Activated T-helper 2 cell treated with anti-CD3 and anti-CD28 coated beads, Interferon-gamma antibody, Interleukin-2, Interleukin-4, amounts not matched to agents 10 μg/mL and 5 μg/mL and 100 μg/mL, durations not matched to agents 14 hours and 24 hours and 36 hours (primary cell): ENCODE measurements at regions of chr2 and their contacts with region 1.

Region 1: GRCh38 chr2:69914170-69914960 is 544 bp upstream of the MXD1 start:
- DNase-seq: peak; percentile 100
- H3K4me3 Mint-ChIP-seq: peak overlapping the region; percentile 83
- H3K27ac Mint-ChIP-seq: peak overlapping the region; percentile 91
- H3K4me1 Mint-ChIP-seq: peaks cover 36% of the 10 kb centered on the region
- H3K27me3 Mint-ChIP-seq: no peaks in the 10 kb centered on the region

Region 2: GRCh38 chr2:69177785-69178636 is 736.4 kb before region 1 on chr2:
- intact Hi-C with region 1: no loop called
- DNase-seq: no peak
- H3K4me3 Mint-ChIP-seq: no peak overlapping the region
- H3K27ac Mint-ChIP-seq: no peak overlapping the region
- H3K4me1 Mint-ChIP-seq: peaks cover 8% of the 10 kb centered on the region
- H3K27me3 Mint-ChIP-seq: peaks cover 25% of the 10 kb centered on the region

Region 3: DNA sequence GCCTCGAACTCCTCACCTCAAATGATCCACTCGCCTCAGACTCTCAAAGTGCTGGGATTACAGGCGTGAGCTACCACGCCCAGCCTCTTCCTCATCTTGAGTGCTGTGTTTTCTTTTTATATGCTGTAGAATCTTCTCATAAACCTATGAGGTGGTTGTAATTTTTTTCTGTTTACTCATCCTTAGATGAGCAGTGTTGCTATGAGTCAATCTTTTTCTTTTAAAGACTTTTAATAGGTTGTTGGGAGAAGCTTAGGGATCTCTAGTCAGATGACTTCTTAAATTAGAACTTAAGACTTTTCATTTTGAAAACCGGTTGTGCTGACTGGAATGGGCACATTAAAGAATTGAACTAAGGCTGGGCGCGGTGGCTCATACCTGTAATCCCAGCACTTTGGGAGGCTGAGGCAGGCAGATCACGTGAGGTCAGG is 262.1 kb before region 1 on chr2:
- intact Hi-C with region 1: no loop called
- DNase-seq: no peak
- H3K4me3 Mint-ChIP-seq: no peak overlapping the region
- H3K27ac Mint-ChIP-seq: peak overlapping the region; percentile 74
- H3K4me1 Mint-ChIP-seq: peaks cover 50% of the 10 kb centered on the region
- H3K27me3 Mint-ChIP-seq: no peaks in the 10 kb centered on the region

Region 4: GRCh38 chr2:69893684-69894551 is 20.4 kb before region 1 on chr2 and contains the start of gene SNRNP27:
- intact Hi-C with region 1: loop called (anchors 2 kb)
- DNase-seq: peak; percentile 72
- H3K4me3 Mint-ChIP-seq: peak within 1 kb of the TSS; percentile 98
- H3K27ac Mint-ChIP-seq: peak within 1 kb of the TSS; percentile 97
- H3K4me1 Mint-ChIP-seq: peaks cover 28% of the 10 kb centered on the region
- H3K27me3 Mint-ChIP-seq: no peaks in the 10 kb centered on the region
- total RNA-seq, gene SNRNP27: 60.4 and 62.6 TPM in 2 replicates

Region 5: DNA sequence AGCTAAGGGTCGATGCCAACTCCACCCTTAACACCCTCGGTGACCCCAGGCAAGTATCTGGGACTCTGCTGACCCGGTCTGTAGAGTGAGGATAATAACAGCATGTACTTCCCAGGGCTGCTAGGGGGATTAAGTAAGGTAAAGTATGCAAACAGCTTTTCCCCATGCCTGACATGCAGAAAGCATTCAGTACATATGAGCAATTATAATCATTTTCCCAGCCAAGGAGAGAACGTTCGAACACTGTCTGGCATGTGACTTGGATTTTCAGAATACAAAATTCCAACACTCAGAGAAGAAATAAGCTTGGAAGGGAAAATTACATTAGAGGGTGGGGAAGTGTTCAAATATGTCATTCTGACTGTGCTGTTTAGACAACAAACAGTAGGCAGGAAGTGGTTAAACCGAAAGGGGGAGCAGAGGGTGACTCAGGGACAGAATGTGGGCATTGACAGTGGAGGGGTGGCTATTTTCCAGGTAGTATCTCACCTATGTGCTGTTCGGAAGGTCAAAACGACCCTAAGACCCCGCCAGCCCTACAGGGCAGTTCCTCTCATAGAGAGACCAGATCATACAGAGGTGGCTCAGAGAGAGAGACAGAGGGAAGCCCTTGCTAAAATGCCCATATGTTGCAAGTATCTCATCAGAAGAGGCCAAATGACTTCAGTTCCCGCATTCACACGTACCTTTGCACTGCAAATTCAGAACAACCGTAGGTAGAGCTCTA is 32.1 kb after region 1 on chr2:
- intact Hi-C with region 1: loop called (anchors 2 kb)
- DNase-seq: peak; percentile 67
- H3K4me3 Mint-ChIP-seq: no peak overlapping the region
- H3K27ac Mint-ChIP-seq: peak overlapping the region; percentile 85
- H3K4me1 Mint-ChIP-seq: peaks cover 44% of the 10 kb centered on the region
- H3K27me3 Mint-ChIP-seq: peaks cover 2% of the 10 kb centered on the region

Region 6: GRCh38 chr2:70069049-70069448 is 154.7 kb after region 1 on chr2:
- intact Hi-C with region 1: loop called (anchors 1 kb)
- DNase-seq: peak; percentile 75
- H3K4me3 Mint-ChIP-seq: no peak overlapping the region
- H3K27ac Mint-ChIP-seq: peak overlapping the region; percentile 86
- H3K4me1 Mint-ChIP-seq: peaks cover 41% of the 10 kb centered on the region
- H3K27me3 Mint-ChIP-seq: no peaks in the 10 kb centered on the region

Region 7: DNA sequence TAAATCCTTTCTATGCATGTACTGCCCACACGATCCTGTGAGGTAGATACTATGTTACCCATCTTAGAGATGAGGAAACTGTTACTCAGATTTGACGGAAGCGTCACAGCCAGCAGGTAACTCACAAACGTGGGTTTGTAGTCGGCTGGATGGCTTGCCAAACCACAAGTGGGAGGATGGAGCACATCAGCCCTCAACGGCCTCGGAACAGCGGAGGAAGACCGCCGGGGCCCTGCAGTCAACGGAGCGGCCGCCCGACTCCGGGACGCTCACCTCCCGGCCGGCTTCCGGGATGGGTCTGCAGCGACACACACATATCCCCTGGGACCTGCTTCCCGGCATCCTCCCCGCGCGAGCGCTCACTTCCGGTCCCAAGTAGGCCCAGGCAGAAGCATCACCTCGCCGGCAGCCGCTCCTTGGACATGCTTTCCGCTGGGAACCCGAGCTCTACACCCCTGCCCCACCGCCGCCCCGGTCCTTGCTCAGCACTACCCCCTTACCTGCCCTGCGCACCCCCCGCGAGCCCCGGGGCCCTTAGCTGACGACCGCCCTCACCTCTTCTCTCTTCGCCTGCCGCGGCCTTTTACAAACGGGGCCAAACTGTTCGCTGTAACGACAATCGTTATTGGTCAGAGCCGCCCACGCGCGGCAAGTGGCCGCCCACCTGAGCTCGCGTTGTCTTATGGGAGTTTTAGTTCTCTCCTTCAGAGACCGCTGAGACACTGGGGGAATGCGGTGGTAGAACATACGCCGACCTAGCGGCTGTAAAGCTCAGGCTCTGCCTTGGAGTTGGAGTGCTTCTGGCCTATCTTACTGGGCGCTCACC is 276.3 kb after region 1 on chr2 and contains the start of gene C2orf42:
- intact Hi-C with region 1: loop called (anchors 1 kb)
- DNase-seq: peak; percentile 94
- H3K4me3 Mint-ChIP-seq: peak within 1 kb of the TSS; percentile 96
- H3K27ac Mint-ChIP-seq: peak within 1 kb of the TSS; percentile 98
- H3K4me1 Mint-ChIP-seq: peaks cover 18% of the 10 kb centered on the region
- H3K27me3 Mint-ChIP-seq: peaks cover under 1% of the 10 kb centered on the region
- total RNA-seq, gene C2orf42: 22.1 and 24.7 TPM in 2 replicates

Region 8: DNA sequence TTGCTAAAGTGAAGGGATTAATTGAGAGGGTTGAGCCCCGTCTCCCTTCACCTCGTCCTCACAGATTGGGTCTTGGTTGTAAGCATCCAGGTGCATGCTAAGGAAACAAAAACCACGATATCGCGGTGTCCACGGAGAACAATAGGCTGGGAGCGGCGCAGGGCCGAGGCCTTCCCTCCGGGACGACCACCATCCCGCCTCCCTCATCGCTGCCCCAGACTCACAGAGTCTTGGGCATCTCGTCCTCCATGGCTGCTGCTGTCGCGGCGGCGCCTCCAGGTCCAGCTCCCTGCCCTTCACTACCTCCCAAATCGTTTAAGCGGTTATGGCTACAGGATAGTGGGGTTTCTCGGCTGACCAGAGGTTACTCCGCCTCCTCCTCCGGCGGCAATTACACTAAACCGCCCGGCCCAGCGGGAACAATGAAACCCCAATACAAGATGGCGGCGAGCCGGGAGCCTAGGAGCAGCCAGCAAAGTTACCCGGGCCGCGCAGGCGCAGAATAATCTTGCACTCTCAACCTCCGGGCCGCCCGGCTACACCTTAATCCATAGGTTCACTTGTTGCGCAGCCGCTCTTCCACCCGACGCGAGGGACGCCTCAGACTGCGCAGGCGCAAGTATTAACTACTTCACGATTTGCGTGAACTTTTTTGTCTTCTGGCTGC is 333.9 kb after region 1 on chr2 and contains the start of gene TIA1:
- intact Hi-C with region 1: loop called (anchors 2 kb)
- DNase-seq: peak; percentile 98
- H3K4me3 Mint-ChIP-seq: peak within 1 kb of the TSS; percentile 95
- H3K27ac Mint-ChIP-seq: peak within 1 kb of the TSS; percentile 98
- H3K4me1 Mint-ChIP-seq: peaks cover 22% of the 10 kb centered on the region
- H3K27me3 Mint-ChIP-seq: no peaks in the 10 kb centered on the region
- total RNA-seq, gene TIA1: 113 TPM in 2 replicates

Region 9: DNA sequence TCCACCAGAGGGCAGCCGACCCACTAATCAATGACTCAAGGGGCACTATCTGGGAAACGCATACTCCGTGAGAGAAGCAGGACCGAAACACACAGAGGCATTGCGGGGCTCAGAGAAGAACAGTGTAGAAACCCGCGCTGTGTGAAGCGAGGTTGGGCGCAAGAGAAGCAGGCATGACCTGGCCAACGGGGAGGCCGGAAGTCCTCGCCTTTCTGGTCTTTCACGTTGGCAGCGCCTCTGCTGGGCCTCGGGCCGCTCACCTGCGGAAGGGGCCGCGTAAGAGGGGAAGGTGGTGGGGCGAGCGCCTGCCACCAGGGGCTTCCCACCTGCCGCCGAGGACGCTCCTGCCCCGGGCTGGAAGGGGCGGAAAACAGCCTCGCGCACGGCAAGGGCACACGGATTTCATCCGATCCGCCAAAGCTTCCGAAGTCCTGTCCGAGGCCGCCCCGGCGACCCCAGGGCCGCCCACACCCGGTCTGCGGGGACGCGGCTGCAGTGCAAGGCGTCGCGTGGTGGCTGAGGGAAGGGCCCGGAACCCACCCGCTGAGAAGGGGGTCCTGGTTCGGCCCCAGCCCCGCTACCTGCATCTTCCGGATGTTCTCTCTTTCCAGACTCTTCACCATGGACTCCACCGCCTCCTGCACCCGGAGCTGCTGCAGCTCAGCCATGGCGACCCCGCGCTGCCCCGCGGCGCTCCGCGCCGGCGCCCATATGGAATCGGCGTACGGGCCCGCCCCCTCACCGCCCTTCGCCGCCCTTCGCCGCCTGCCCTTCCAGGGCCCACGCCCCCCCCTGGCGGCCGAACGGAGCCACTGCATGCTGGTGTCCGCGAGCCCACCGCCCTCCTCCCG is 387.2 kb after region 1 on chr2 and contains the start of gene FAM136A:
- intact Hi-C with region 1: loop called (anchors 2 kb)
- DNase-seq: peak; percentile 86
- H3K4me3 Mint-ChIP-seq: peak within 1 kb of the TSS; percentile 88
- H3K27ac Mint-ChIP-seq: peak within 1 kb of the TSS; percentile 90
- H3K4me1 Mint-ChIP-seq: peaks cover 31% of the 10 kb centered on the region
- H3K27me3 Mint-ChIP-seq: no peaks in the 10 kb centered on the region
- total RNA-seq, gene FAM136A: 71.3 and 71.8 TPM in 2 replicates